ENCODE measurements at regions of chr20 and their contacts with region 1.

Region 1: GRCh38 chr20:36895036-36895435 is 19.1 kb downstream of the TLDC2 start:
- DNase-seq: no peak
- ATAC-seq: peak; percentile 47
- H3K4me3 ChIP-seq: no peak overlapping the region
- H3K4me3 Mint-ChIP-seq: no peak overlapping the region
- H3K27ac ChIP-seq: no peak overlapping the region
- H3K27ac Mint-ChIP-seq: peak overlapping the region; percentile 62
- H3K4me1 ChIP-seq: no peaks in the 10 kb centered on the region
- H3K4me1 Mint-ChIP-seq: peaks cover 16% of the 10 kb centered on the region
- H3K27me3 ChIP-seq: no peaks in the 10 kb centered on the region
- H3K27me3 Mint-ChIP-seq: no peaks in the 10 kb centered on the region
- CTCF ChIP-seq: no peak

Region 2: DNA sequence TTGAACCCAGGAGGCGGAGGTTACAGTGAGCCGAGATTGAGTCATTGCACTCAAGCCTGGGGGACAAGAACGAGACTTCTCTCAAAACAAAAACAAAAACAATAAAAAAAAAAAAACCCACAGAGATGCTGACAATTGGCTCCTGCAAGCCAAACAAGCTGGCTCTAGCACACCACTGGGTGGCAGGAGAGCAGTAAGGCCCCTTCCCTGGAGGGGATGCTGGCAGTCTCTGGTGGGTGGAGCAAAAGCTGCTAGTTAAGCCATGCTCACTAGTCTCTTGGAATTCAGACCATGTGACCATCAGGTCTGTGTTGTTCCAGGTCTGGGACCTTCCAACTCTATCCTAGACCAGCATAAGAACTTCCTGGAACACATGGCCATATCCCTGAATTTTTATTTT is 102.6 kb before region 1 on chr20:
- CTCF ChIA-PET with region 1: no interaction called
- POLR2A ChIA-PET with region 1: no interaction called
- intact Hi-C with region 1: no loop called
- DNase-seq: no peak
- ATAC-seq: no peak
- H3K4me3 ChIP-seq: no peak overlapping the region
- H3K4me3 Mint-ChIP-seq: no peak overlapping the region
- H3K27ac ChIP-seq: no peak overlapping the region
- H3K27ac Mint-ChIP-seq: no peak overlapping the region
- H3K4me1 ChIP-seq: no peaks in the 10 kb centered on the region
- H3K4me1 Mint-ChIP-seq: no peaks in the 10 kb centered on the region
- H3K27me3 ChIP-seq: no peaks in the 10 kb centered on the region
- H3K27me3 Mint-ChIP-seq: no peaks in the 10 kb centered on the region
- CTCF ChIP-seq: no peak

Region 3: GRCh38 chr20:36919715-36920333 is 24.8 kb after region 1 on chr20:
- CTCF ChIA-PET with region 1: interaction called, 4 read pairs
- POLR2A ChIA-PET with region 1: interaction called, 3 read pairs
- intact Hi-C with region 1: loop called in 1 of 2 experiments (anchors 2 kb)
- DNase-seq: peak in 5 of 14 experiments; percentile 5 to 78 (median 71)
- ATAC-seq: peak; percentile 91
- H3K4me3 ChIP-seq: no peak overlapping the region
- H3K4me3 Mint-ChIP-seq: peak overlapping the region; percentile 25
- H3K27ac ChIP-seq: no peak overlapping the region
- H3K27ac Mint-ChIP-seq: peak overlapping the region; percentile 72
- H3K4me1 ChIP-seq: peaks cover 11% of the 10 kb centered on the region
- H3K4me1 Mint-ChIP-seq: peaks cover 21% of the 10 kb centered on the region
- H3K27me3 ChIP-seq: no peaks in the 10 kb centered on the region
- H3K27me3 Mint-ChIP-seq: no peaks in the 10 kb centered on the region
- CTCF ChIP-seq: peak; percentile 90

Region 4: DNA sequence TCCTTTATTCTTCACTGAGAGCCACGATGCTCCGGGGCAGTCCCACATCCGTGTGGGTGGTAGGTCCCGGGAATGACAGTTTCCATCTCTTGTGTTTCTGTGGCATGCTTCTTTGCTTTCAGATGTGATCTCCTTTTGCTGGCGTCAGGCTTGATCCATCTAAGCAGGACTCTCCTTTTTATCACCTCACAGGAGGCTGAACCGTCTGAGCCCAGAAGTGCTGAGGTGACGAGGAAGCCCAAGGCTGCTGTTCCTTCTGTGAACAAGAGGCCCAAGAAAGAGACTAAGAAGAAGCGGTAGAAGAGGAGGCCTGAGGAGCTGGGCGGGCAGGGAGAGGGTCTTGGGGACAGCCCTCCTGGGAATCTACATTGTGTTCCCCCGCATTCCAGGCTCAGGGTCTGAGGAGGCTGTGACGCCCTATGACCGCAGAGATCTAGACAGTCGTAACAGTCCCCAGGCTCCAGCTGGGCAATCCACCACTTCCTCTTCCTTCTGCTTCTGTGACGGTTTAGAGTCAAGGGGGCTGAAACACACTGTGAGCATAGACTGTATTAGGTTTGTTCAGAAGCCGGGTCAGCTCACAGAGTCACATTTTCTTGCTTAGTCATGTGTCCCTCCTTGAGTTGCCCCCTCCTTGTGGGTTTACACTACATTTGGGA is 421.2 kb after region 1 on chr20:
- CTCF ChIA-PET with region 1: no interaction called
- POLR2A ChIA-PET with region 1: no interaction called
- intact Hi-C with region 1: no loop called
- DNase-seq: peak in 4 of 14 experiments; percentile 9 to 69 (median 44)
- ATAC-seq: peak; percentile 89
- H3K4me3 ChIP-seq: no peak overlapping the region
- H3K4me3 Mint-ChIP-seq: no peak overlapping the region
- H3K27ac ChIP-seq: peak overlapping the region; percentile 36 to 39
- H3K27ac Mint-ChIP-seq: peak overlapping the region; percentile 84
- H3K4me1 ChIP-seq: peaks cover 13% of the 10 kb centered on the region
- H3K4me1 Mint-ChIP-seq: peaks cover 21% of the 10 kb centered on the region
- H3K27me3 ChIP-seq: no peaks in the 10 kb centered on the region
- H3K27me3 Mint-ChIP-seq: no peaks in the 10 kb centered on the region
- CTCF ChIP-seq: no peak